Activated CD4-positive, alpha-beta T cell treated with anti-CD3 and anti-CD28 coated beads, Interleukin-2, amount 10 ng/mL, durations not matched to agents 24 days and 14 days (primary cell): ENCODE measurements at regions of chr14 and their contacts with region 1.

Region 1: GRCh38 chr14:63727774-63728728 is at the start of gene SGPP1:
- DNase-seq: peak; percentile 94
- H3K4me3 Mint-ChIP-seq: peak within 1 kb of the TSS; percentile 100
- H3K27ac Mint-ChIP-seq: peak within 1 kb of the TSS; percentile 98
- H3K4me1 Mint-ChIP-seq: peaks cover 31% of the 10 kb centered on the region
- H3K27me3 Mint-ChIP-seq: peaks cover 19% of the 10 kb centered on the region
- total RNA-seq, gene SGPP1: 12.2 and 13.3 TPM in 2 replicates

Region 2: GRCh38 chr14:63632932-63633514 is 95.0 kb before region 1 on chr14:
- intact Hi-C with region 1: no loop called
- DNase-seq: peak; percentile 62
- H3K4me3 Mint-ChIP-seq: no peak overlapping the region
- H3K27ac Mint-ChIP-seq: no peak overlapping the region
- H3K4me1 Mint-ChIP-seq: peaks cover 18% of the 10 kb centered on the region
- H3K27me3 Mint-ChIP-seq: no peaks in the 10 kb centered on the region

Region 3: GRCh38 chr14:63770187-63770807 is 42.2 kb after region 1 on chr14:
- intact Hi-C with region 1: loop called (anchors 1 kb)
- DNase-seq: peak; percentile 87
- H3K4me3 Mint-ChIP-seq: no peak overlapping the region
- H3K27ac Mint-ChIP-seq: no peak overlapping the region
- H3K4me1 Mint-ChIP-seq: peaks cover 9% of the 10 kb centered on the region
- H3K27me3 Mint-ChIP-seq: no peaks in the 10 kb centered on the region